ENCODE measurements at regions of chr13 and their contacts with region 1.

Region 1: GRCh38 chr13:49278211-49278610 is 30.5 kb downstream of the CDADC1 start:
- DNase-seq: no peak
- H3K4me3 ChIP-seq: no peak overlapping the region
- H3K27ac ChIP-seq: no peak overlapping the region
- H3K4me1 ChIP-seq: no peaks in the 10 kb centered on the region
- H3K27me3 ChIP-seq: no peaks in the 10 kb centered on the region
- CTCF ChIP-seq: no peak
- POLR2A ChIP-seq: no peak

Region 2: GRCh38 chr13:48975856-48976575 is 302.2 kb before region 1 on chr13 and contains the start of gene FNDC3A:
- CTCF ChIA-PET with region 1: interaction called, 5 read pairs
- POLR2A ChIA-PET with region 1: no interaction called
- dilution Hi-C with region 1: no loop called
- intact Hi-C with region 1: loop called (anchors 5 kb)
- DNase-seq: peak; percentile 82
- H3K4me3 ChIP-seq: peak within 1 kb of the TSS; percentile 60 to 93 (median 86)
- H3K27ac ChIP-seq: peak within 1 kb of the TSS; percentile 87
- H3K4me1 ChIP-seq: peaks cover 19% of the 10 kb centered on the region
- H3K27me3 ChIP-seq: no peaks in the 10 kb centered on the region
- CTCF ChIP-seq: peak in 1 of 2 donors; percentile 16
- POLR2A ChIP-seq: peak; percentile 23
- total RNA-seq, gene FNDC3A: 50.8 and 51.2 TPM in 2 replicates

Region 3: GRCh38 chr13:49240017-49240416 is 38.2 kb before region 1 on chr13:
- CTCF ChIA-PET with region 1: interaction called, 24 read pairs
- POLR2A ChIA-PET with region 1: no interaction called
- dilution Hi-C with region 1: no loop called
- intact Hi-C with region 1: loop called (anchors 1 kb)
- DNase-seq: peak; percentile 41
- H3K4me3 ChIP-seq: no peak overlapping the region
- H3K27ac ChIP-seq: no peak overlapping the region
- H3K4me1 ChIP-seq: no peaks in the 10 kb centered on the region
- H3K27me3 ChIP-seq: peaks cover 0 to 3% of the 10 kb centered on the region in 2 experiments
- CTCF ChIP-seq: peak; percentile 48 to 51
- POLR2A ChIP-seq: no peak

Region 4: GRCh38 chr13:49265822-49266221 is 12.4 kb before region 1 on chr13:
- CTCF ChIA-PET with region 1: interaction called, 14 read pairs
- POLR2A ChIA-PET with region 1: no interaction called
- dilution Hi-C with region 1: no loop called
- intact Hi-C with region 1: no loop called
- DNase-seq: no peak
- H3K4me3 ChIP-seq: no peak overlapping the region
- H3K27ac ChIP-seq: no peak overlapping the region
- H3K4me1 ChIP-seq: no peaks in the 10 kb centered on the region
- H3K27me3 ChIP-seq: no peaks in the 10 kb centered on the region
- CTCF ChIP-seq: no peak
- POLR2A ChIP-seq: no peak

Region 5: GRCh38 chr13:49369866-49370265 is 91.7 kb after region 1 on chr13:
- CTCF ChIA-PET with region 1: no interaction called
- POLR2A ChIA-PET with region 1: no interaction called
- dilution Hi-C with region 1: no loop called
- intact Hi-C with region 1: no loop called
- DNase-seq: no peak
- H3K4me3 ChIP-seq: no peak overlapping the region
- H3K27ac ChIP-seq: no peak overlapping the region
- H3K4me1 ChIP-seq: peaks cover 2% of the 10 kb centered on the region
- H3K27me3 ChIP-seq: no peaks in the 10 kb centered on the region
- CTCF ChIP-seq: no peak
- POLR2A ChIP-seq: no peak

Region 6: DNA sequence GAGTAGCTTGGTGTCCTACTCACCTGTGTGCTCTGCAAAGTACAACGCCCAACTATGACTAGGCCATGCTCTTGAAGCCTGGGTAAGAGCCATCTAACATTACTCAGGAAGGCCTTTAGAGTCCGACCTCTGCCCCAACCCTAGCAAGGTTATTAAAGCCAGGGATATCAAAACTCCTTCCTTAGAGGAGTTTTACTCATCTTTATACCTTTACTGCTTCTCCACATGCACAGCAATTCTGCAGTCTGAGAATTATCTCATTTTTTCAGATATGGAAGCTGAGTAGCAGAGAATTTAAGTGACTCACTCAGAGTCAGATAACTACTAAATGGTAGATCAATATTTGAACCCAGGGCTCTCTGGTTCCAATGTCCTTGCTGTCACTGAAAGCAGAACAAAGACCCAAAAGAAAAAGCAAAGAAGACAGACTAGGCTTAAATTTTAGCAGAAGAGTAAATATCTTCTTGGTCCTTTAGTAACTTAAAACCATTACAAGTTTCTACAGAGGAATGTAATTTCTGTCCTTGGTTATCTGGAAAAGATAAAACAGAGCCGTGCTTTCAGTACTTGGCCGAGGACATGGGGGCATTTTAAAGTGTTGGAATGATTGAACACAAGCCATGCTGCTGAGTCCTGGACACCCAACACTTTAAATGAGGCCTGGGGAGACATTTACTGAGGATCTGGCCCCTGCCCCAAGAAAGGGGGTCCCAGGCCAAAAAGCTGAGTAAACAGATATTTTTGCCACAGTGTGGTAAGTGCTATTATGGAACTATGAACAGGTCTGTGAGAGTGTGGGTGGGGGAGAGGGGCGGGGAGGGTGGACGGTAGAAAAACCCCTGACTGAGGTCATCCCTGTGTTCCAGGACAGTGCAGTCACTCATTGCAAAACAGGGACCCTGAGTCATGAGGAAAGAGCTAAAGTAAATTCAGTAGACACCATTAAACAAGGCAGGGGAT is 532.6 kb after region 1 on chr13:
- CTCF ChIA-PET with region 1: no interaction called
- POLR2A ChIA-PET with region 1: no interaction called
- dilution Hi-C with region 1: no loop called
- intact Hi-C with region 1: no loop called
- DNase-seq: no peak
- H3K4me3 ChIP-seq: no peak overlapping the region
- H3K27ac ChIP-seq: no peak overlapping the region
- H3K4me1 ChIP-seq: no peaks in the 10 kb centered on the region
- H3K27me3 ChIP-seq: peaks cover 37 to 47% of the 10 kb centered on the region in 2 experiments
- CTCF ChIP-seq: no peak
- POLR2A ChIP-seq: no peak